Right cardiac atrium (tissue), 5 donors: ENCODE measurements at regions of chr19 and their contacts with region 1.

Region 1: DNA sequence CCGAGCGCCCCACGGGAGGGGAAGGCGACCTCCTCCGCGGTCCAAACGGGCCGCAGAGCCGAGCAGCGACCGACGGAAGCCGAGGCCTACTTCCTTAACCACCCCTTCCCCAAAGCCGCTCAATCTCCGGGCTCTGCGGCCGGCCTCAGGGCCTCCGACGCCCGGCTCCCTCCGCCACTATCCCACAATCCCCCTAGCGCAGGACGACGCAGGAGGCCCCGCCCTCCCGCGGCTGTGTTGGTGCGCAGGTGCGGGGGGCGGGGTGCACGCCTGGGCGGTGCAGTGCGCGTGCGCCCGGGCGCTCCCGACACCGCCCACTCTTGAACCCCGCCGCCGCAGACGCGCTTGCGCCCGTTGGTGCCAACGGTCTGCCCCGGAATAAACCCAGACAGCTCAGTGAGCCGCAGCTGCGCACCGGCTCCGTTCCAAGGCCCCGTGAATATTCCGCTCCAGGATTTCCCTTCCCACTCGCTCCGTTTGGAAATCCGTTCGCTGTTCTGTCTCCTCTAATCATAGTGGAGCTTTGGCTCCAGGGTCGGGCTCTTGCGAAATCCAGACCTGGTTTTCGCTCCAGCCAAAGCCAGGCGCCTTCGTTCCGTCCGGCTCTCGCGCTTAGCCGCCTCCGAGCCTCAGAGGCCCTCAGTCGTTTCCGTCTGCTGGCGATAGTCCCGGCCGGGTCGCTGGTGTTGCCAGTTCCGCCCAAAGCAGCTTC is at the start of gene PPP6R1:
- DNase-seq: peak; percentile 98 to 99 (median 99)
- ATAC-seq: peak; percentile 96 to 97
- H3K4me3 ChIP-seq: peak within 1 kb of the TSS; percentile 70
- H3K27ac ChIP-seq: peak within 1 kb of the TSS; percentile 80
- H3K4me1 ChIP-seq: peaks cover 18% of the 10 kb centered on the region
- H3K27me3 ChIP-seq: no peaks in the 10 kb centered on the region
- total RNA-seq, gene PPP6R1: 39.3 to 43.5 (median 41.4) TPM

Region 2: GRCh38 chr19:55279770-55280643 is 21.0 kb after region 1 on chr19 and contains the start of gene HSPBP1:
- intact Hi-C with region 1: loop called in 1 of 4 experiments (anchors 2 kb)
- DNase-seq: peak; percentile 92 to 98 (median 97)
- ATAC-seq: peak; percentile 92 to 93
- H3K4me3 ChIP-seq: peak within 1 kb of the TSS; percentile 56
- H3K27ac ChIP-seq: peak within 1 kb of the TSS; percentile 59
- H3K4me1 ChIP-seq: no peaks in the 10 kb centered on the region
- H3K27me3 ChIP-seq: no peaks in the 10 kb centered on the region
- total RNA-seq, gene HSPBP1: 27.7 to 35.1 (median 31.3) TPM